Activated CD4-positive, alpha-beta T cell treated with anti-CD3 and anti-CD28 coated beads for 36 hours (primary cell): ENCODE measurements at regions of chr11 and their contacts with region 1.

Region 1: GRCh38 chr11:72222907-72223614 is 1.5 kb upstream of the INPPL1 start:
- DNase-seq: peak; percentile 96
- ATAC-seq: peak; percentile 80
- H3K4me3 Mint-ChIP-seq: peak overlapping the region; percentile 96
- H3K27ac Mint-ChIP-seq: peak overlapping the region; percentile 80
- H3K4me1 Mint-ChIP-seq: peaks cover 16% of the 10 kb centered on the region
- H3K27me3 Mint-ChIP-seq: peaks cover 3% of the 10 kb centered on the region

Region 2: GRCh38 chr11:71787098-71787823 is 435.8 kb before region 1 on chr11:
- CTCF ChIA-PET with region 1: no interaction called
- POLR2A ChIA-PET with region 1: no interaction called
- intact Hi-C with region 1: loop called in 1 of 2 experiments (anchors 1 kb)
- DNase-seq: peak; percentile 97
- ATAC-seq: peak; percentile 97
- H3K4me3 Mint-ChIP-seq: peak overlapping the region; percentile 84
- H3K27ac Mint-ChIP-seq: peak overlapping the region; percentile 95
- H3K4me1 Mint-ChIP-seq: peaks cover 24% of the 10 kb centered on the region
- H3K27me3 Mint-ChIP-seq: no peaks in the 10 kb centered on the region

Region 3: DNA sequence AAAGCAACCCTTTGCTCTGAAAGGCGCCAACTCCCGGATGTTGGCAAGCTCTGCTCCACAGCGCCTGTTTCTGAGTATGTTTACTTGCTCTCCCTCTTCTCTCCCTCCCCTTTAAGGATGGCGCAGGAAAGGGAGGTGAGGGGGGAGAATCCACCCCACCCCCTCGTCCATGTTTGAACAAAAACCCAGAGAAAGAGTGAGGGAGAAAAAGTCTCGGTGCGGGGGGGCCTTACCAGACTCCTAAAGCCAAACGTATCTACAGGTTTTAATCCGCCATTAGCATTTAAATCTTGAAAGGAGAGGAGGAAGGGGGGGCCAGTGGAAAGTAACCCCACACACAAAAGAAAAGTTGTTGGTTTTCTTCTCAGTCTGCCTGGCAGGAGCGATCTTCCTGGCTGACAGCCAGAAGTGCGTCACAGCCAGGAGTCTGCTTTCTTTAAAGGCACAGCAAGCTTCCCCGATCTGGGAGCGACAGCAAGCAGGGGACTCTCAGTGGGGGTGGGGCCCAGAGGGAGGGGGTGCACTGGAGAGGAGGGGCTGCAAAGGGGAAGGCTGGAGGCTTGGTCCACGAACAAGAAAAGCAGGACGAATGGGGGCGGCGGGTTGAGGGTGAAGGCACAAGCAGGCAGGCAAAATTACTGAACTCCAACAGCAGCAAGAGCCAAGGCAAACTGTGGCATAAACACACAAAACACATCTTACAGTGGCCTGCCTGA is 182.2 kb before region 1 on chr11:
- CTCF ChIA-PET with region 1: interaction called, 3 read pairs
- POLR2A ChIA-PET with region 1: no interaction called
- intact Hi-C with region 1: loop called in 1 of 2 experiments (anchors 2 kb)
- DNase-seq: peak; percentile 86
- ATAC-seq: peak; percentile 76
- H3K4me3 Mint-ChIP-seq: no peak overlapping the region
- H3K27ac Mint-ChIP-seq: no peak overlapping the region
- H3K4me1 Mint-ChIP-seq: peaks cover 35% of the 10 kb centered on the region
- H3K27me3 Mint-ChIP-seq: no peaks in the 10 kb centered on the region

Region 4: GRCh38 chr11:72112321-72113219 is 110.5 kb before region 1 on chr11 and contains the start of gene ANAPC15:
- CTCF ChIA-PET with region 1: interaction called, 3 read pairs
- POLR2A ChIA-PET with region 1: no interaction called
- intact Hi-C with region 1: loop called in 1 of 2 experiments (anchors 1 kb)
- DNase-seq: peak; percentile 100
- ATAC-seq: peak; percentile 89
- H3K4me3 Mint-ChIP-seq: peak within 1 kb of the TSS; percentile 92
- H3K27ac Mint-ChIP-seq: peak within 1 kb of the TSS; percentile 98
- H3K4me1 Mint-ChIP-seq: peaks cover 16% of the 10 kb centered on the region
- H3K27me3 Mint-ChIP-seq: no peaks in the 10 kb centered on the region
- total RNA-seq, gene ANAPC15: 60.3 to 76.1 TPM

Region 5: DNA sequence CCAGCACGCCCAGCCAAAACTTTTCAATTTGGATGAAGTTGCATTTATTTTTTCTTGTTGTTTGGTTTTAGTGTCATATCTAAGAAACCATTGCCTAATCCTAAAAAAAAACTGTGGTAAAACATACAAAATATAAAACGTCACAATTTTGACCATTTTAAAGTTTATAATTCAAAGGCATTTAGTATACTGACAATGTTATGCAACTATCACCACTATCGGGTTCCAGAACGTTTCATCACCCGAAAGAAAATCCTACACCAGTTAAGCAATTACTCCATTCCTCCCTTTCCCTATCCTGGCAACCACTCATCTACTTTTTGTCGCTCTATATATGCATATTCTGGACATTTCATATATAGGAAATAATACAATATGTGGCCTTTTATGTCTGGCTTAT is 51.4 kb after region 1 on chr11:
- CTCF ChIA-PET with region 1: no interaction called
- POLR2A ChIA-PET with region 1: no interaction called
- intact Hi-C with region 1: loop called in 1 of 2 experiments (anchors 5 kb)
- DNase-seq: no peak
- ATAC-seq: no peak
- H3K4me3 Mint-ChIP-seq: no peak overlapping the region
- H3K27ac Mint-ChIP-seq: no peak overlapping the region
- H3K4me1 Mint-ChIP-seq: peaks cover 11% of the 10 kb centered on the region
- H3K27me3 Mint-ChIP-seq: peaks cover 5% of the 10 kb centered on the region

Region 6: GRCh38 chr11:72446902-72447769 is 224.1 kb after region 1 on chr11:
- CTCF ChIA-PET with region 1: no interaction called
- POLR2A ChIA-PET with region 1: no interaction called
- intact Hi-C with region 1: no loop called
- DNase-seq: no peak
- ATAC-seq: peak; percentile 61
- H3K4me3 Mint-ChIP-seq: no peak overlapping the region
- H3K27ac Mint-ChIP-seq: no peak overlapping the region
- H3K4me1 Mint-ChIP-seq: no peaks in the 10 kb centered on the region
- H3K27me3 Mint-ChIP-seq: peaks cover 14% of the 10 kb centered on the region